Ascending aorta (tissue), 2 donors: ENCODE measurements at regions of chr12 and their contacts with region 1.

Region 1: GRCh38 chr12:132887513-132888351 is at the start of gene CHFR:
- DNase-seq: peak; percentile 92 to 98
- H3K4me3 ChIP-seq: peak within 1 kb of the TSS; percentile 76 to 80
- H3K27ac ChIP-seq: peak within 1 kb of the TSS; percentile 93 to 96
- H3K4me1 ChIP-seq: peaks cover 0 to 6% of the 10 kb centered on the region in 2 donors
- H3K27me3 ChIP-seq: no peaks in the 10 kb centered on the region
- CTCF ChIP-seq: no peak
- total RNA-seq, gene CHFR: 7.9 TPM

Region 2: GRCh38 chr12:132687208-132688164 is 200.2 kb before region 1 on chr12 and contains the starts of genes POLE and PXMP2:
- intact Hi-C with region 1: loop called (anchors 2 kb)
- DNase-seq: peak; percentile 84 to 98
- H3K4me3 ChIP-seq: peak within 1 kb of the TSS; percentile 91 to 94
- H3K27ac ChIP-seq: peak within 1 kb of the TSS; percentile 67 to 75
- H3K4me1 ChIP-seq: peaks cover 4 to 19% of the 10 kb centered on the region in 2 donors
- H3K27me3 ChIP-seq: no peaks in the 10 kb centered on the region
- CTCF ChIP-seq: peak in 1 of 3 experiments; percentile 44
- total RNA-seq, gene POLE: 115 TPM
- total RNA-seq, gene PXMP2: 18.8 TPM

Region 3: GRCh38 chr12:132804426-132804861 is 83.3 kb before region 1 on chr12:
- intact Hi-C with region 1: no loop called
- DNase-seq: no peak
- H3K4me3 ChIP-seq: no peak overlapping the region
- H3K27ac ChIP-seq: no peak overlapping the region
- H3K4me1 ChIP-seq: no peaks in the 10 kb centered on the region
- H3K27me3 ChIP-seq: no peaks in the 10 kb centered on the region
- CTCF ChIP-seq: no peak

Region 4: GRCh38 chr12:132908145-132909044 is 20.7 kb after region 1 on chr12:
- intact Hi-C with region 1: loop called (anchors 1 kb)
- DNase-seq: peak; percentile 83 to 96
- H3K4me3 ChIP-seq: peak overlapping the region; percentile 79 to 86
- H3K27ac ChIP-seq: peak overlapping the region; percentile 83 to 85
- H3K4me1 ChIP-seq: peaks cover 0 to 6% of the 10 kb centered on the region in 2 donors
- H3K27me3 ChIP-seq: no peaks in the 10 kb centered on the region
- CTCF ChIP-seq: no peak

Region 5: DNA sequence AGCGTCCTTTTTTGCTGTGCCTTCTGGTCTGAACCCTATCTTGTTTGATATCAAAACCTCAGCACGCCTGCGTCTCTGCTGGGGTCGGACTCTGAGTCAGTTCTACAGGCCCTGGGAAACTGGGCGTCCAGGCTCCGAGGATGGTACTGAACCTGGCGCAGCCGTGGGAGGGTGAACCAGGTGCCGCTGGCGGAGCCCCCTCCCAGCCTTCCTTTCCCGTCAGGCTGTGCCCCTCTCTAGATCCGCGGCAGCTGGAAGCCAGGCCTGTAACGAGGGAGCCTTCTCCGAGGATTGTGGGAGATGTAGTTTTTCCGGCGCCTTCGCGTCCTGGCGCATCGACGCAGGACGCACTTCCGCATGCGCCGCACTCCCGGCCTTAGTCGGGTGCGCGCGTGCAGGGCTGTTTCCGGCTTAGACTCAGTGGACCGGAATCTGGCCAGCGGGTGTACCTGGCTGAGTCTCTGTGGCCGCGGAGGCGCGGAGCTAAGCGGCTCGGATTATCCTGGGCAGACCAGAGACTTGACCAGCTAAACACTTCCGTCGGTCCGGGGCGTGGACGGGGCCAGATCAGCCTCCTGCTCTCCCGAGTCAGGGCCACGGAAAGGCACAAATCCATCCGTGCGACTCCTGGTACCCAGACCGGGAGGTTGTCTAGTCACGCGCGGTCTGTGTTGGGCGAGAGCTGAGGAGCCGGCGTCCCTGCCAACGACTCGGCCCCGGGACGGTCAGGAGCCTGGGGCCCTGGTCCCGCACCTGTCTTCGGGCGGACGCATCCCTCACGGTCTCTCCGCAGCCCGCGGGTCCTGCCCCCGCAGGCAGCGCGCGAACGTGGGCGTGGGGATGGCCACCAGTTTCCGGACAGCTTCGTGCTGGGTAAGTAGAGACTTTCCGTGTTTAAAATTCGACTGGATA is 98.5 kb after region 1 on chr12 and contains the start of gene ZNF26:
- intact Hi-C with region 1: loop called (anchors 1 kb)
- DNase-seq: peak; percentile 64 to 94
- H3K4me3 ChIP-seq: peak within 1 kb of the TSS; percentile 81 to 84
- H3K27ac ChIP-seq: peak within 1 kb of the TSS; percentile 84 to 93
- H3K4me1 ChIP-seq: peaks cover 3 to 6% of the 10 kb centered on the region in 2 donors
- H3K27me3 ChIP-seq: no peaks in the 10 kb centered on the region
- CTCF ChIP-seq: no peak
- total RNA-seq, gene ZNF26: 73.4 TPM

Region 6: DNA sequence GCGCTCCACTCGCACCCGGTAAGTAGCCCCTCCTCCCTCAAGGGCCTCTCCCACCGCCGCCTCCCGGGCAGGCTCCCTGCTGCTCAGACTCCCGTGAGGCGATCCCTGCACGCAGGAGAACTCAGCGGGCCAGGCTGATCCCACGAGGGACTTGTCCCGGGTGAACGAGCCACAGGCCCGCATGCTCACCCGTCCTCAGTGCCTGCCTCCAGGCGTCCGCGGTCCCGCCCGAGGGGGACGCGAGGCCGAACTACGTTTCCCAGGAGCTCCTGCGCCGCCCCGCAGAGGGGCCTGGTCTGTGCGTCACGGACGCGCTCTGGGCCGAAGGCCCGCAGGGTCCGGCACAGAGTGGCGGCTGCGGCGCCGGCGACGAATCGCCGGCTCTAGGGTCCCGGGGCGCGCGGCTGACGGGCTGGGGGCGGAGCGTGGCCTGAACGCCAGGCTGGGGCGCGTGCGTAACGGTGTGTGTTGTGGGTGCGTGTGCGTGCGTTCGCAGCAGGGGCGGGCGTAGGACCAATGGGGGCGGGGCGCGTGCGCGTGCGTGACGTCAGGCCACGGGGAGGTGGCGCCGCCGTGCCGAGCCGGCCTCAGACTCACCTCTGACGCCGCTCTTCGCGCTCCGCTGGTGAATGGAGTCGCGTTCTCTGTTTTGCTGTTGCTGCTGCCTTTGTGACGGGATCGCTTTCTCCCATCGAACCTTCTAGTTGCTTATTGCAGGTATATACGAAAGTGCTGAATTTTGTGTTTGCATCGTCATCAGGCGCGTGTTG is 242.5 kb after region 1 on chr12 and contains the starts of genes ZNF10 and ZNF891:
- intact Hi-C with region 1: loop called (anchors 1 kb)
- DNase-seq: peak; percentile 78 to 97
- H3K4me3 ChIP-seq: peak within 1 kb of the TSS; percentile 90 to 94
- H3K27ac ChIP-seq: peak within 1 kb of the TSS; percentile 89 to 93
- H3K4me1 ChIP-seq: peaks cover 0 to 7% of the 10 kb centered on the region in 2 donors
- H3K27me3 ChIP-seq: no peaks in the 10 kb centered on the region
- CTCF ChIP-seq: peak in 1 of 3 experiments; percentile 3
- total RNA-seq, gene ZNF10: 3.8 TPM
- total RNA-seq, gene ZNF891: 2.0 TPM